Ovary (tissue), 10 donors: ENCODE measurements at regions of chr1 and their contacts with region 1.

Region 1: DNA sequence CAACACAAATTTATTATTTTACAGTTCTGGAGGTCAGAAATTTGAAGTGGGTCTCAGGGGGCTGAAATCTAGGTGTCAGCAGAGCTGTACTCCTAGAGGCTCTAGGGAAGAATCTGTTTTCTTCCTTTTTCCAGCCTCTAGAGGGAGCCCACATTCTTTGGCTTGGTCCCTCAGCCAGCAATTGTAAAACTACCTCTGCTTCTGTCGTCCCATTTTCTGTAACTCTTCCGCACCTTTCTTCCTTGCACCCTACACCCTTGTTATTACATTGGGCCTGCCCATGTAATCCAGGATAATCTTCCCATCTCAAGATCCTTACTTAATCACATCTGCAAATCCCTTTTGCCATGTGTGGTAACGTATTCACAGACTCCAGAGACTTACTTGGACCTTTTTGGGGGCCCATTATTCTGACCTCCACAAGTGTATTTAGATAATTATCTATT is 24.8 kb upstream of the THEM4 start:
- DNase-seq: peak in 2 of 5 donors; percentile 26 to 61
- H3K4me3 ChIP-seq: no peak overlapping the region
- H3K27ac ChIP-seq: no peak overlapping the region
- H3K4me1 ChIP-seq: peaks cover 1% of the 10 kb centered on the region
- H3K27me3 ChIP-seq: no peaks in the 10 kb centered on the region
- CTCF ChIP-seq: peak; percentile 77 to 83 (median 79)
- EP300 ChIP-seq: no peak
- POLR2A ChIP-seq: no peak

Region 2: GRCh38 chr1:151909150-151910149 is 24.6 kb before region 1 on chr1 and contains the start of gene THEM4:
- intact Hi-C with region 1: no loop called
- DNase-seq: peak; percentile 97 to 99 (median 97)
- H3K4me3 ChIP-seq: peak within 1 kb of the TSS; percentile 62
- H3K27ac ChIP-seq: peak within 1 kb of the TSS in 1 of 2 donors; percentile 29
- H3K4me1 ChIP-seq: peaks cover 1% of the 10 kb centered on the region
- H3K27me3 ChIP-seq: no peaks in the 10 kb centered on the region
- CTCF ChIP-seq: peak; percentile 42 to 58 (median 44)
- EP300 ChIP-seq: no peak
- POLR2A ChIP-seq: peak; percentile 58
- total RNA-seq, gene THEM4: 10.4 to 21.8 (median 16.7) TPM

Region 3: DNA sequence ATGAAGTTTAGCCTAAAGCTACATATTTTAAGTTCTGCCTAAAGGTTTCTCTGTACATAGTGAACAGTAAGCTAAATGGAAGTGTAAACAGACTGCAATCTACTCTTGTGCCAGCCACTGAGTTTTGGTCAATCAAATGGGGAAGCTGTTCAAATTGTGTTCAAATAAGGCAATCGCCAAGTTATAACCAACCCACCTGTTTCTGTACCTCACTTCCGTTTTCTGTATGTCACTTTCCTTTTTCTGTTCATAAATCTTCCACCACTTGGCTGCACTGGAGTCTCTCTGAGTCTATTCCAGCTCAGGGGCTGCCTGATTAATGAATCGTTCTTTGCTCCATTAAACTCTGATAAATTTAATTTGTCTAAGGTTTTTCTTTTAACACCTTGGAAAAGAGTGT is 13.9 kb before region 1 on chr1:
- intact Hi-C with region 1: no loop called
- DNase-seq: no peak
- H3K4me3 ChIP-seq: no peak overlapping the region
- H3K27ac ChIP-seq: no peak overlapping the region
- H3K4me1 ChIP-seq: no peaks in the 10 kb centered on the region
- H3K27me3 ChIP-seq: no peaks in the 10 kb centered on the region
- CTCF ChIP-seq: no peak
- EP300 ChIP-seq: no peak
- POLR2A ChIP-seq: no peak

Region 4: GRCh38 chr1:151993654-151994496 is 59.8 kb after region 1 on chr1 and contains the start of gene S100A10:
- intact Hi-C with region 1: loop called in 3 of 4 experiments (anchors 2 to 5 kb)
- DNase-seq: peak; percentile 82 to 89 (median 88)
- H3K4me3 ChIP-seq: peak within 1 kb of the TSS; percentile 61
- H3K27ac ChIP-seq: peak within 1 kb of the TSS; percentile 30 to 87
- H3K4me1 ChIP-seq: peaks cover 18% of the 10 kb centered on the region
- H3K27me3 ChIP-seq: no peaks in the 10 kb centered on the region
- CTCF ChIP-seq: no peak
- EP300 ChIP-seq: no peak
- POLR2A ChIP-seq: peak; percentile 72
- total RNA-seq, gene S100A10: 38.6 to 327 (median 213) TPM

Region 5: GRCh38 chr1:152001391-152002249 is 67.5 kb after region 1 on chr1:
- intact Hi-C with region 1: loop called in 2 of 4 experiments (anchors 2 kb)
- DNase-seq: peak; percentile 74 to 91 (median 86)
- H3K4me3 ChIP-seq: no peak overlapping the region
- H3K27ac ChIP-seq: no peak overlapping the region
- H3K4me1 ChIP-seq: no peaks in the 10 kb centered on the region
- H3K27me3 ChIP-seq: no peaks in the 10 kb centered on the region
- CTCF ChIP-seq: peak; percentile 72 to 86 (median 81)
- EP300 ChIP-seq: no peak
- POLR2A ChIP-seq: no peak

Region 6: GRCh38 chr1:152148981-152149380 is 214.9 kb after region 1 on chr1:
- intact Hi-C with region 1: no loop called
- DNase-seq: no peak
- H3K4me3 ChIP-seq: no peak overlapping the region
- H3K27ac ChIP-seq: no peak overlapping the region
- H3K4me1 ChIP-seq: no peaks in the 10 kb centered on the region
- H3K27me3 ChIP-seq: no peaks in the 10 kb centered on the region
- CTCF ChIP-seq: no peak
- EP300 ChIP-seq: no peak
- POLR2A ChIP-seq: no peak